B cell (primary cell): ENCODE measurements at regions of chr12 and their contacts with region 1.

Region 1: DNA sequence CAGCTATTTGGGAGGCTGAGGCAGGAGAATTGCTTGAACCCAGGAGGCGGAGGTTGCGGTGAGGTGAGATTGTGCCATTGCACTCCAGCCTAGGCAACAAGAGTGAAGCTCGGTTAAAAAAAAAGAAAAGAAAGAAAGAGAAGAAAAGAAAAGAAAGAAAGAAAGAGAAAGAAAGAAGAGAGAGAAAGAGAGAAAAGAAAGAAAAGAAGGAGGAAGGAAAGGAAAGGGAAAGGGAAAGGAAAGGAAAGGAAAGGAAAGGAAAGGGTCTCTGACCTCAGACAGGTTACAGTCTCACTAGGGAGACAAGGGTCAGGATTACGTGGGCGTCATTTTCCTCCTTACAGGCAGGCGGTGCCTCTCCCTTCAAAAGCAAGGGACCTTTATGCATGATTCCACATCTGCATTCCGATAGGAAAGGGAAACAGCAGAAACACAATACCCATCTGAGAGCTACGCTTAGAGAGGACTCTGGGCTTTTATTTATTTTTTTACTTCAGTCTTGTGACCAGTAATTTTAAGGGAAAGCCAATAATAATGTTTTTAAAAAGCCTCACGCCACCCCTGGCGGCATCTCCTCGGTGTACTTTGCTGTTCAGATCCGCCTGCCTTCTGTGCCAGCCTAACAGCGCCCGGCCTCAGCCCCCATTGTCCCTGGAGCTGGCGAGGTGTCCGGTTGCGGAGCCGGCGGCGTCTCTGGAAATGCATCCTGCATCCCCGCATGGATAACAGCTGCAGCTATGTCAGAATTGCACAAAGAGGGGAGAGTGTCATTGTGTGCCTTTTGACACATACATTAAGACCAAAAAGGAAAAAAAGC is 945 bp upstream of the HIP1R start:
- DNase-seq: peak; percentile 65
- ATAC-seq: no peak
- H3K4me3 ChIP-seq: peak overlapping the region; percentile 24 to 99 (median 45)
- H3K4me3 Mint-ChIP-seq: peak overlapping the region; percentile 98
- H3K27ac ChIP-seq: peak overlapping the region; percentile 25 to 38
- H3K27ac Mint-ChIP-seq: peak overlapping the region; percentile 88
- H3K4me1 ChIP-seq: peaks cover 32 to 35% of the 10 kb centered on the region in 2 donors
- H3K4me1 Mint-ChIP-seq: peaks cover 40% of the 10 kb centered on the region
- H3K27me3 ChIP-seq: no peaks in the 10 kb centered on the region
- H3K27me3 Mint-ChIP-seq: no peaks in the 10 kb centered on the region
- CTCF ChIP-seq: peak; percentile 34

Region 2: GRCh38 chr12:122767691-122768090 is 66.6 kb before region 1 on chr12:
- CTCF ChIA-PET with region 1: no interaction called
- POLR2A ChIA-PET with region 1: no interaction called
- intact Hi-C with region 1: loop called (anchors 5 kb)
- DNase-seq: no peak
- ATAC-seq: no peak
- H3K4me3 ChIP-seq: no peak overlapping the region
- H3K4me3 Mint-ChIP-seq: no peak overlapping the region
- H3K27ac ChIP-seq: peak overlapping the region in 1 of 2 donors; percentile 40
- H3K27ac Mint-ChIP-seq: no peak overlapping the region
- H3K4me1 ChIP-seq: no peaks in the 10 kb centered on the region
- H3K4me1 Mint-ChIP-seq: no peaks in the 10 kb centered on the region
- H3K27me3 ChIP-seq: no peaks in the 10 kb centered on the region
- H3K27me3 Mint-ChIP-seq: no peaks in the 10 kb centered on the region
- CTCF ChIP-seq: no peak

Region 3: DNA sequence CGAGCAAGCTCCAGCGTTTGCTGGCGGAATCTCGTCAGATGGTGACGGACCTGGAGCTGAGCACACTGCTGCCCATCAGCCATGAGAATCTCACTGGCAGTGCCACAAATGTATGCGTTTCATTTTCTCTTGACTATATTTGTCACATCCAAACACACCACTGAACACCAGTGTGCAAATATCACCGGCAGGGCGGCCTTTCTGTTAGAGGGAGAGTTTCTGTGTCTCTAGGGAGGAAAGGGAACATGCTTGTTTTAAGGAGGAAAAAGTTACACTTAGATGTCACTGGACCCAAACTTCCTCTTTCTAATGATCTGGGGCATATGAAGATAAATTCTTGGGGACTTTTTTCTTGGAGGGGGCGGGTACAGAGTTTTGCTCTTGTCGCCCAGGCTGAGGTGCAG is 21.0 kb before region 1 on chr12:
- CTCF ChIA-PET with region 1: interaction called, 14 read pairs
- POLR2A ChIA-PET with region 1: interaction called, 25 read pairs
- intact Hi-C with region 1: loop called (anchors 1 kb)
- DNase-seq: peak; percentile 90
- ATAC-seq: peak; percentile 98
- H3K4me3 ChIP-seq: peak overlapping the region in 4 of 5 experiments; percentile 28 to 62 (median 38)
- H3K4me3 Mint-ChIP-seq: peak overlapping the region; percentile 90
- H3K27ac ChIP-seq: peak overlapping the region; percentile 74 to 85
- H3K27ac Mint-ChIP-seq: peak overlapping the region; percentile 96
- H3K4me1 ChIP-seq: peaks cover 29 to 38% of the 10 kb centered on the region in 2 donors
- H3K4me1 Mint-ChIP-seq: peaks cover 45% of the 10 kb centered on the region
- H3K27me3 ChIP-seq: no peaks in the 10 kb centered on the region
- H3K27me3 Mint-ChIP-seq: no peaks in the 10 kb centered on the region
- CTCF ChIP-seq: peak; percentile 42

Region 4: DNA sequence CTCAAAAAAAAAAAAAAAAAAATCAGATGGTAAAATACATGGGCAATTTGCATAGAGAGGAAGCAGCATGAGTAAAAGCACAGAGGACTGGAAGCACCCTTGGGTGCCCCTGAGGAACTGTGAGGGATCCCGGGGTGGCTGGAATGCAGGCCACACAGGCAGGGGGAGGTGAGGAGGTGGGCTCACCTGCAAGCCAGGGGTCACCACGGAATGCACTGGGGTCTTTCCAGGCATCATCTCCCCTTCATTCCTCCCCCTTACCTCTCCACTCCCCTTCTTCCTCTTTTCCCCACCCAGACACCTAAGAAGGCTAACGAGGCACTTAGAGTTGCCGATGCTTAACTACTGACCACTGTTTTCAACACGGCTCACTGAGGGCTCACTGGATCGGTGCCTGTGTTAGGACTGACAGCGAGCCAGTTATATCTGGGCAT is 13.5 kb before region 1 on chr12:
- CTCF ChIA-PET with region 1: interaction called, 13 read pairs
- POLR2A ChIA-PET with region 1: interaction called, 11 read pairs
- intact Hi-C with region 1: loop called (anchors 1 kb)
- DNase-seq: peak; percentile 79
- ATAC-seq: peak; percentile 89
- H3K4me3 ChIP-seq: peak overlapping the region; percentile 18 to 49 (median 33)
- H3K4me3 Mint-ChIP-seq: peak overlapping the region; percentile 88
- H3K27ac ChIP-seq: peak overlapping the region; percentile 83 to 84
- H3K27ac Mint-ChIP-seq: peak overlapping the region; percentile 90
- H3K4me1 ChIP-seq: peaks cover 46 to 50% of the 10 kb centered on the region in 2 donors
- H3K4me1 Mint-ChIP-seq: peaks cover 48% of the 10 kb centered on the region
- H3K27me3 ChIP-seq: no peaks in the 10 kb centered on the region
- H3K27me3 Mint-ChIP-seq: no peaks in the 10 kb centered on the region
- CTCF ChIP-seq: no peak

Region 5: DNA sequence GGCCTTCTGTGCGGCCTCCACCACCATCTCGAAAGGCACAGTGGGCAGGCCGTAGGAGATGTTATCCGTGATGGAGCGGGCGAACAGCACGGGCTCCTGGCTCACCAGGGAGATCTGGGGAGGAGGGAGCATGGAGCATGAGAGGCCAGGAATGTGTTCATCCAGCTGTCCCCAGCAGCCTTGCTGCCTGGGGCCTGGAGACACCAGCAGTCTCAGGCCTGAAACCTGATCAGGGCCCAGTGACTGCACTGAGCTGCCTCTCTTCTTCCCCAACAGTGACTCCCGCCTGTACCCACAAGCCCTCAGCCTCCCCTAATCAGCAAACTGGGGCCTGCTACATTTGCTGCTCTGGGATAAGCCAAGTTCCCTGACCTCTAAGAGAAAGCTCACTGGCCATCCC is 101.0 kb after region 1 on chr12:
- CTCF ChIA-PET with region 1: no interaction called
- POLR2A ChIA-PET with region 1: no interaction called
- intact Hi-C with region 1: no loop called
- DNase-seq: no peak
- ATAC-seq: no peak
- H3K4me3 ChIP-seq: no peak overlapping the region
- H3K4me3 Mint-ChIP-seq: no peak overlapping the region
- H3K27ac ChIP-seq: no peak overlapping the region
- H3K27ac Mint-ChIP-seq: no peak overlapping the region
- H3K4me1 ChIP-seq: peaks cover 7 to 23% of the 10 kb centered on the region in 2 donors
- H3K4me1 Mint-ChIP-seq: peaks cover 10% of the 10 kb centered on the region
- H3K27me3 ChIP-seq: no peaks in the 10 kb centered on the region
- H3K27me3 Mint-ChIP-seq: no peaks in the 10 kb centered on the region
- CTCF ChIP-seq: no peak

Region 6: DNA sequence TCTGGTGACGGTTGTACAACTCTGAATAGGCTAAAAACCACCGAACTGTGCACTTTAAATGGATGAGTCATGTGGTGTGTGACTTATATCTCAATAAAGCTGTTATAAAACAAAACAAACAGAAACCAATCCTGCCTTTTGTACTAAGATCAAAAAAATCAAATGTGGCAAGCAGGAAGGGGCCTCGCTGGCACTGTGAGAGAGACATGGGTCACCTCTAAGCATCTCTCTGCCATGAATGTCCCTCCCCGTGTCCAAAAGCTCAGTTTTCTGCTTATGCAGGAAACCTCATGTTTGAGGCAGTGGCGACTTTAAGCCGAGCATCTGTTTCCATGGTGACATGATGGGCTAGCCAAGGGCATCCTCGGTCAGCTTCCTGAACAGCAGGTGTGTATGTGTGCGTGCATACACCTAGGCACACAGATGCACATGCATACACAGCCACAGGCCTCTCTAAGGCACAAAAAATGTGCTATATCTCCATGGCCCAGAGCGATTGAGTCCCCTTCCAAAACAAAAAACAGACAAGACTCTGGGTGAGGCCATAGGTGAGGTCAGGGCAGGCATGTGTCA is 190.6 kb after region 1 on chr12:
- CTCF ChIA-PET with region 1: no interaction called
- POLR2A ChIA-PET with region 1: no interaction called
- intact Hi-C with region 1: no loop called
- DNase-seq: no peak
- ATAC-seq: no peak
- H3K4me3 ChIP-seq: no peak overlapping the region
- H3K4me3 Mint-ChIP-seq: no peak overlapping the region
- H3K27ac ChIP-seq: no peak overlapping the region
- H3K27ac Mint-ChIP-seq: no peak overlapping the region
- H3K4me1 ChIP-seq: no peaks in the 10 kb centered on the region
- H3K4me1 Mint-ChIP-seq: no peaks in the 10 kb centered on the region
- H3K27me3 ChIP-seq: no peaks in the 10 kb centered on the region
- H3K27me3 Mint-ChIP-seq: no peaks in the 10 kb centered on the region
- CTCF ChIP-seq: no peak